Dendritic cell treated with granulocyte-macrophage colony-stimulating factor and Interleukin-4, amounts not matched to agents 40 ng/mL and 50 ng/mL, for 4 days (primary cell): ENCODE measurements at regions of chr20 and their contacts with region 1.

Region 1: GRCh38 chr20:9978397-9979004 is 56.3 kb upstream of the ANKEF1 start:
- H3K4me3 Mint-ChIP-seq: no peak overlapping the region
- H3K27ac Mint-ChIP-seq: peak overlapping the region; percentile 25
- H3K4me1 Mint-ChIP-seq: peaks cover 53% of the 10 kb centered on the region
- H3K27me3 Mint-ChIP-seq: peaks cover 12% of the 10 kb centered on the region

Region 2: DNA sequence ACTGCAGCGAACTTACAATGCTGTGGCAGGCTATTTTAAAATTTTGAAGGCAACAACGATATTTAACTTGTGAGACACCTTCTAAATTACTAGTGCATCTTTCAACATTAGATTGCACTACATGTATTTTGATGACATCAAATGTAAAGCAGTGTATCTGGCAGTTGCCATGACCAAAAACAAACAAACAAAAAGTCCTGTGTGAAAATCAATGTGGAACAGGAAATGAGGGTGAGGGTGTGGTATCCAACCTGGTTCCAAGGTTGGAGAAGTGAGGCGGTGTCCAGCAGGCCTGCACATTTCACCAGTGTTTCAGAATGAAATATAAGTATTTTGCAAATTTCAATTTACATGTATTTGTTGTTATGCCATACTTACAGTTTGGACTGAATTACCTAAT is 352.1 kb before region 1 on chr20:
- intact Hi-C with region 1: loop called (anchors 5 kb)
- H3K4me3 Mint-ChIP-seq: no peak overlapping the region
- H3K27ac Mint-ChIP-seq: no peak overlapping the region
- H3K4me1 Mint-ChIP-seq: peaks cover 42% of the 10 kb centered on the region
- H3K27me3 Mint-ChIP-seq: peaks cover 34% of the 10 kb centered on the region

Region 3: DNA sequence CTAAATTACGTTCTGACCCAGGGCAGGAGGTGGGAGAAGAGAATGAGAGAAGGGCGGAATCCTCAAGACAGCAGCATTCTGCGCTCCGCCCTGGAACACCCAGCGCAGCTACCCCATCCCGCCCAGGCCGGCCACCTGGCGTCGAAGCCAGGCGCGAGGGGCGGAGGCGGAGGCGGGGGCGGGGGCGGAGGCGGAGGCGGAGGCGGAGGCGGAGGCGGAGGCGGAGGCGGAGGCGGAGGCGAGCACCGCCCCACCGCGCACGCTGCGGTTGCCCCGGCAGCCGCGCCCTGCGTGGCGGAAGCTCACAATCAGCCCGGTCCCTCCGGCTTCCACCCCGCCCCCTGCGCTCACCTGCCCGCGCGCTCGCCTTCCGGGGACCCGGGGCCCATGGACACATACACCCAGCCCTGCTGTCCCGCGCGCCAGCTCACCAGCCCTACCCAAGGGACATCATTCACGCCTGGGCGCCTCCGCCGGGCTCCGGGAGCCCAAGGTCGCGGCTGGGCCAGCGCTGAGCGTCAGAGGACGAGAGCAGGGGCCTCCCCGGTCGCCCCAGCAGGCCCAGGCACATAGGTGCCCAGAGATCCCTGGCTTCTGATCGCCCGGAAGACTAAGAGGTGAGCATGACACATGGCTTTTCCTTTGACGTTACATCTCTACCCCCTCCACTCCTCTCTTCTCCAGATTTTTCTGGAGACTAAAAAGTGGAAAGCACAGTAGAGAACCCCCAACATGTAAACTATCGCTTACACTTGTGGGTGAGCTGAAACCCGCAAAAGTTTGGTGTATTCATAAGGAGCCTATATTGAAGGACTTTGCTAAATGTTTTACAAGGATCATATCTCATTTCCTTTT is 56.4 kb after region 1 on chr20 and contains the start of gene ANKEF1:
- intact Hi-C with region 1: loop called (anchors 5 kb)
- H3K4me3 Mint-ChIP-seq: peak within 1 kb of the TSS; percentile 83
- H3K27ac Mint-ChIP-seq: peak within 1 kb of the TSS; percentile 76
- H3K4me1 Mint-ChIP-seq: peaks cover 23% of the 10 kb centered on the region
- H3K27me3 Mint-ChIP-seq: peaks cover 13% of the 10 kb centered on the region

Region 4: GRCh38 chr20:10219452-10219791 is 240.9 kb after region 1 on chr20:
- intact Hi-C with region 1: loop called (anchors 5 kb)
- H3K4me3 Mint-ChIP-seq: no peak overlapping the region
- H3K27ac Mint-ChIP-seq: no peak overlapping the region
- H3K4me1 Mint-ChIP-seq: peaks cover 15% of the 10 kb centered on the region
- H3K27me3 Mint-ChIP-seq: peaks cover 47% of the 10 kb centered on the region

Region 5: GRCh38 chr20:10673988-10674711 is 695.6 kb after region 1 on chr20 and contains the start of gene JAG1:
- intact Hi-C with region 1: loop called (anchors 10 kb)
- H3K4me3 Mint-ChIP-seq: peak within 1 kb of the TSS; percentile 100
- H3K27ac Mint-ChIP-seq: peak within 1 kb of the TSS; percentile 98
- H3K4me1 Mint-ChIP-seq: peaks cover 36% of the 10 kb centered on the region
- H3K27me3 Mint-ChIP-seq: peaks cover 24% of the 10 kb centered on the region